ENCODE measurements at regions of chr15 and their contacts with region 1.

Region 1: GRCh38 chr15:70466895-70467529 is 296.3 kb downstream of the UACA start:
- DNase-seq: peak; percentile 71
- H3K4me3 ChIP-seq: no peak overlapping the region
- H3K27ac ChIP-seq: no peak overlapping the region
- H3K4me1 ChIP-seq: peaks cover 13% of the 10 kb centered on the region
- CTCF ChIP-seq: peak; percentile 90

Region 2: DNA sequence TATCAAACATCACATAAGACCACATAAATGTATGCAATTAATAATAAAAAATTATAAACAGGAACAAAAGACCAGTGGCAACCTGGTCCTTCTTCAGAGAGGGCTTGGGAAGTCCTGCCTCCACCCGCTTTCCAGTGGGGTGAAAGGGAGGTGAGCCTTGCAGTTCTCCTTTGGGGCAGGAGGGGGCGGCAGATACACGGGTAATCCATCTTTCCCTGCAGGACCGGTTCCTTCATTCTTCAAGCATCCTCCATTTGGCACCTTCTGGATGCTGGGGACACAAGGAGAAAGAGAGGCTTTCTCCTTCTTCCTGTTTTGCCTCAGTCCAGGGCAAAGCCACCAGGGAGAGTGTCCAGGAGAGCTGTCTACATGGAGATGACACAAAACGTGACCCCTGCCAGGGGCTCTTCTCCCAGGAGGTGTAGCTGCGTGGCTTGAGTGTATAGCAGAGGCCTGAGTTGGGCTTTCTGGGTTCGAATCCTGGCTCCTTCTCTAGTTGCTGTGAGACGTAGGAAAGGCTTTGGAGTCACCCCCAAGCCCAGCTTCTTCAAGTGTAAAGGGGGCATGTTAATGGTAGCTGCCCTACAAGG is 991.1 kb before region 1 on chr15:
- CTCF ChIA-PET with region 1: no interaction called
- POLR2A ChIA-PET with region 1: no interaction called
- intact Hi-C with region 1: loop called (anchors 5 kb)
- DNase-seq: peak; percentile 56
- H3K4me3 ChIP-seq: no peak overlapping the region
- H3K27ac ChIP-seq: no peak overlapping the region
- H3K4me1 ChIP-seq: no peaks in the 10 kb centered on the region
- CTCF ChIP-seq: peak; percentile 87

Region 3: GRCh38 chr15:69576035-69576526 is 890.9 kb before region 1 on chr15:
- CTCF ChIA-PET with region 1: no interaction called
- POLR2A ChIA-PET with region 1: no interaction called
- intact Hi-C with region 1: loop called (anchors 10 kb)
- DNase-seq: peak; percentile 43
- H3K4me3 ChIP-seq: no peak overlapping the region
- H3K27ac ChIP-seq: no peak overlapping the region
- H3K4me1 ChIP-seq: no peaks in the 10 kb centered on the region
- CTCF ChIP-seq: peak; percentile 81

Region 4: DNA sequence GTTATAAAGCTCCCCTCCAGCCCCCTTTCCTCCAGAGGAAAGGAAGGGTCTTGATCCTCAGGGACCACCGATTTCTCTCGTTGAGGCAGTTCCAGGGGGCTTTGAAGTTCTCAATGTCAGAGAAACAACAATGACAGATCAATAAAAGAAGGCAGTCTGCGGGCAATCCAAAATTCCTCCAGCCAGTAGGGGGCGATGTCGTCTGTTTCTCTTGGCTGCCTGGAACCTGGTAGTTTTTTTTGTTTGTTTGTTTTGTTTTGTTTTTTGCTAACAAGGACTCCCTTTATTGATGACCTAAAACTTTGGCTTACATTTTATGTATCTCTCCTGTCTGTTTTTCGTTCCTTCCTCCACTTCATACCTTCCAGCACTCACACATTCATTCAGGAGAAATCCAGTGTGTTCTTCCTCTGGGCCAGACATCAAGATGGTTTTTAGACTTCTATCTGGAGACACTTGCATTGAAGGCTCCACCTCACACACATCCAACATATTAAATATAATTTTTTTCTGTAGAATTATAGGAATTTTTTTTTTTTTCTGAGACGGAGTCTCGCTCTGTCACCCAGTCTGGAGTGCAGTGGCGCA is 737.8 kb before region 1 on chr15:
- CTCF ChIA-PET with region 1: no interaction called
- POLR2A ChIA-PET with region 1: no interaction called
- intact Hi-C with region 1: loop called (anchors 5 kb)
- DNase-seq: peak; percentile 56
- H3K4me3 ChIP-seq: no peak overlapping the region
- H3K27ac ChIP-seq: no peak overlapping the region
- H3K4me1 ChIP-seq: no peaks in the 10 kb centered on the region
- CTCF ChIP-seq: peak; percentile 99

Region 5: GRCh38 chr15:69976366-69976994 is 490.5 kb before region 1 on chr15:
- CTCF ChIA-PET with region 1: no interaction called
- POLR2A ChIA-PET with region 1: no interaction called
- intact Hi-C with region 1: loop called (anchors 10 kb)
- DNase-seq: peak; percentile 81
- H3K4me3 ChIP-seq: no peak overlapping the region
- H3K27ac ChIP-seq: no peak overlapping the region
- H3K4me1 ChIP-seq: peaks cover 30% of the 10 kb centered on the region
- CTCF ChIP-seq: no peak

Region 6: GRCh38 chr15:70264014-70264582 is 202.9 kb before region 1 on chr15:
- CTCF ChIA-PET with region 1: no interaction called
- POLR2A ChIA-PET with region 1: no interaction called
- intact Hi-C with region 1: loop called (anchors 5 kb)
- DNase-seq: no peak
- H3K4me3 ChIP-seq: no peak overlapping the region
- H3K27ac ChIP-seq: no peak overlapping the region
- H3K4me1 ChIP-seq: peaks cover 59% of the 10 kb centered on the region
- CTCF ChIP-seq: no peak

Region 7: GRCh38 chr15:70289203-70289955 is 177.6 kb before region 1 on chr15:
- CTCF ChIA-PET with region 1: no interaction called
- POLR2A ChIA-PET with region 1: no interaction called
- intact Hi-C with region 1: no loop called
- DNase-seq: no peak
- H3K4me3 ChIP-seq: no peak overlapping the region
- H3K27ac ChIP-seq: no peak overlapping the region
- H3K4me1 ChIP-seq: no peaks in the 10 kb centered on the region
- CTCF ChIP-seq: no peak

Region 8: DNA sequence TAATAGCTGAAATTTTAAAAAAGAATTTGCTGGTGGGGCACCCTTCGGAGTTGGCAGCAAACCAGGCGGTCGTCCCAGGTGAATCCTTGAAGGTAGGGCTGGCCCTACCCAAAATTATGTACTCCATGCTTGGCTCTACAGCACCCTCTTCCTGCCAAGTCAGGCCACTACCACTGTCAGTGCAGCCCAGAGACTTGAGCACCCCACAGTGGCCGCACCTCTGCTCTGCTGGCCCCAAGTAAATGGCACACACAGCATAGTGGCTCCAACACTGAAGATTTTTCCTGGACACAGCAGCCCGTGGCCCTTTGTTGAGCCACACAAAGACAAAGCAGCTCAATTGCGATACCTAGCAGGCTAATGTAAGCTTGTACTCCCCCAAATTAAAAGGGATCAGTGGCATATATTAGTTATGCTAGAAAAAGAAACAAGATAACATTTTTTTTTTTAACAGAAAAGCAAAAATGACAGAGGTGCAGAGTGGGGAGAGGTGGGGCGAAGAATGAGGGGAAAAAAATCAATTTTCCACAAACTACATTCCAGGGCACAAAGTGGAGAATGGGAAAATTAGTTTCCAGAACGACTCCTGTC is 45.9 kb after region 1 on chr15:
- CTCF ChIA-PET with region 1: no interaction called
- POLR2A ChIA-PET with region 1: interaction called, 3 read pairs
- intact Hi-C with region 1: loop called (anchors 5 kb)
- DNase-seq: peak; percentile 84
- H3K4me3 ChIP-seq: no peak overlapping the region
- H3K27ac ChIP-seq: no peak overlapping the region
- H3K4me1 ChIP-seq: peaks cover 3% of the 10 kb centered on the region
- CTCF ChIP-seq: peak; percentile 100

Measured in OCI-LY7 (cell line).